Activated CD4-positive, alpha-beta memory T cell treated with anti-CD3 and anti-CD28 coated beads, Interleukin-2, amount 10 ng/mL, durations not matched to agents 7 days and 5 days (primary cell): ENCODE measurements at regions of chr1 and their contacts with region 1.

Region 1: DNA sequence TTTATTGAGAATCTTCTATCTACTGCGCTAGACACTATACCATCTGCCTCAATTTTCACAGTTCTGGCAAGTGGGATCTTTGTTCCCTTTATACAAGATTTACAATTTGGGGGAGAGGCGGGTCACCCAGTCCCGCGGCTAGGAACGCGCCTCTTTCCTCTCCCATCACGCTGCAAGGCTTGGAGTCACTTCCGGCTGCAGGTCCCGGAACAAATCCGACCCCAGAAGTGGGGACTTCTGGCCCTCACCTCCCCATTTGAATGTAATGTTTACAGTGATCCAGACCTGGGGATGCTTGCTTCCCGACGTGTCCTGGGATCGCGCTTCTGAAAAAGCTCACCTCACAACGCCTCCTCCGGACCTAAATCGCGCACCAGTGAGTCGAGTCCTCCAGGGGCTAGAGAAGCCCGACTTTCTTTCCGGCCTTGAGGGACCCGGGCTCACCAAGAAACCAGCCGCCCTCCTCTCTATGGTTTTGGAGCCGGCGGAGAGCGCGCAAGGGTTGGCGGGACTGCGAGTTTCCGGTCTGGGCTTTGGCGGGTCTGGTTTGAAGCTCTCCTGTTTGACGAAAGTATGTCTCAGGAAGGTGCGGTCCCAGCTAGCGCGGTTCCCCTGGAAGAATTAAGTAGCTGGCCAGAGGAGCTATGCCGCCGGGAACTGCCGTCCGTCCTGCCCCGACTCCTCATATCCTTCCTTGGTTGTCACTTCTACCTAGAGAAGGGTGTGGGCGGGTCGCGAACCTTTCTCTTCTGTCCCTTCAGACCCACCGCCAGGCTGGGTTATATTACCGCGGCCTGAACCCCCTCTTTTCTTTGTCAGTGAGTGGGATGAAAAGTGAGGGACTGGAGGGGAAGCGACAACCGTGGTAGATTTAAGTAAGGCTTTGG is at the start of gene METTL18:
- DNase-seq: peak; percentile 95
- H3K4me3 Mint-ChIP-seq: peak within 1 kb of the TSS; percentile 84
- H3K27ac Mint-ChIP-seq: peak within 1 kb of the TSS; percentile 88
- H3K4me1 Mint-ChIP-seq: peaks cover 55% of the 10 kb centered on the region
- H3K27me3 Mint-ChIP-seq: no peaks in the 10 kb centered on the region
- total RNA-seq, gene METTL18: 14.2 to 15.7 TPM

Region 2: DNA sequence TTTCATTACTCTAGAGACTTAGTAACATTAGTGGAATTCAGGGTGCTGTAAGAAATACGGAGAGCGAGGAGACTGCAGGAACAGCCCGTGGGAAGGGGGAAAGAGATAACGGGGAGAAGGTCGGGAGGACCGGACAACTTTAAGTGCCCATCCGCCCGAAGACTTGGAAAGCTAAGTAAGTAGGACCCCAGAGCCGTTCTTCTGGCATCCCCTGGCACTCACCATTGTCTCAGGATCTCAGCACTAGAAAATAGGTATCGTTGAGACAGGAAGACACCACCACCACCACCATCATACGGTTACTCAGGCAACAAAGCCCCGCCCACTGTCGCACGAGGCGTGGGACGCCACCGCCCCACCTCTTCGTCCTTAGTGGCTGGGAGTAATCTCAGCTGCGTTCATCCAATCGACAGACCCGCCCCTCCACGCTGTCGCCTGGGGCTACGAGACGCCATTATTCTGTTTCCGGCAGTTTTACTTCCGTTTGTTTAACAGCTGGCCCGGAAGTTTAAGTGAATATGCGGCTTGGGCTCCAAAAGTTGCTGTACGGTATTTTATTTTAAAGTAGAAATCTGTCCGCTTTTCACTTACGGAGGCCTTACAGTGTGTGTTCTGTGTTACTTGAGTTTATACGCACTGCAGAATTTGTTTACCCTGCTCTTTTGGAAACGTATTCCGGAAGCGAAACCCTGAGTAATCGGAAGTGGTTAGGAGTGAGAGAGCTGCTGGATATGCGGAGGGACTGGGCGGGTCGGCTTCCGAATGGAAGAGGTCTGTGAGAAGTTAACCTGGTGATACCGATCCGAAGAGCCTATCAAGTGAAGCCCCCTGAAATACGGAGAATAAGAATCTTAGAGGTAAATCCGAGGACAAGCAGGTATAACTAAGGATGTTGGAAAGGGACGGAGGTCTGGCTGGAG is 427.0 kb before region 1 on chr1 and contains the starts of genes BLZF1 and NME7:
- CTCF ChIA-PET with region 1: no interaction called
- POLR2A ChIA-PET with region 1: interaction called, 16 read pairs
- DNase-seq: peak; percentile 99
- H3K4me3 Mint-ChIP-seq: no peak within 1 kb of the TSS
- H3K27ac Mint-ChIP-seq: no peak within 1 kb of the TSS
- H3K4me1 Mint-ChIP-seq: peaks cover 39% of the 10 kb centered on the region
- H3K27me3 Mint-ChIP-seq: no peaks in the 10 kb centered on the region
- total RNA-seq, gene BLZF1: 48.1 to 49.3 TPM
- total RNA-seq, gene NME7: 26.1 to 28.3 TPM

Region 3: DNA sequence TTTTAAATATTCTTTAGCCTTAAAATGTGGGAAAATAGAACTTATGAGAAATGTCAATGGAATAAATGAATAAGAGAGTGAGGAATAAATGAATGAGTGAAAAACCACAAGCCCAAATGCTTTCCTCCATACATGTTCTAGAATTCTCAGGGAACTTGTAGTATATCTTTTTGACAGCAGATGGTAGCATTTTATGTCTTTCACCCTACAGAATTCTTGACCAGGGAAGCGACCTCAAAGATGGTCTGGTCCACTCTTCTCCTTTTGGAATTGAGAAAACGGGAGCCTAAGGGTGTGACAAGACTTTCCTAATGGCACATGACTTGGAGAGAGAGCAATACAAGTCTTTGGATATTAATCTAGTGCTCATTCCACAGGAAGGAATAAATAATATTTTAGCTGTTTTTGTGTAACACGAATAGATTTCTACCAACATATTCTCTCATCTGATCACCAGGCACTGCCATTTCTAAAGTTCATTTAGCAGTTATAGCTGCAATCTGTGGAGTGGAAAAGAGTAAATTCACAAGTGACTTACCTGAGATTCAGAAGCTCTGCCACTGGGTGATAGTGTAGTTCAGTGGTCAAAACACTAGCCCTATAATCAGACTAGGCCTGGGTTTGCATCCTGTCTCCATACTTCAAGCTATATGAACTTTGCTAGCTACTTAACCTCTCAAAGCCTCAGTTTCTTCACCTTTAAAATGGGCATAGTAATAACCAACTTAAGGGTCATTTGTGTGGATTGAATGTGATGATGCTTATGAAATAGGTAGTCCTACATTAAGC is 193.5 kb before region 1 on chr1:
- CTCF ChIA-PET with region 1: interaction called, 6 read pairs
- POLR2A ChIA-PET with region 1: interaction called, 21 read pairs
- DNase-seq: no peak
- H3K4me3 Mint-ChIP-seq: no peak overlapping the region
- H3K27ac Mint-ChIP-seq: no peak overlapping the region
- H3K4me1 Mint-ChIP-seq: peaks cover 51% of the 10 kb centered on the region
- H3K27me3 Mint-ChIP-seq: peaks cover 7% of the 10 kb centered on the region

Region 4: DNA sequence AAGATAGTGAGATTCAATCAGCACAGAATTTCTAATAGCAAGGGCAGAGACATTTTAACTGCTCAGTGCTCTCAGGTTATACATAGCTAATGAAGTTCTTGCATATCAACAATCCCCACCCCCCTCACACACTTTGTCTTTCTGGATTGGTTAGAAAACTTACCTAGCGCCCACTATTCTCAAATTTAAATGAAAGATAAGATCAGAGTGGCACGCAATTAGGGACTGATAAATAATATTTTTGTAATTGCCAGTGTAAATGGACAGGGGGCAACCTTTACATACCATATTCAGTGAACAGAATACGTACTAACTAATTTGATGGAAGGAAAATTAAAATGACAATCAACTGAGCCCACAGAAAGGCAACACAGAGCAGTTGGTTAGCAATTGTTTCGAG is 95.1 kb before region 1 on chr1:
- CTCF ChIA-PET with region 1: no interaction called
- POLR2A ChIA-PET with region 1: interaction called, 42 read pairs
- DNase-seq: no peak
- H3K4me3 Mint-ChIP-seq: no peak overlapping the region
- H3K27ac Mint-ChIP-seq: peak overlapping the region; percentile 84
- H3K4me1 Mint-ChIP-seq: peaks cover 96% of the 10 kb centered on the region
- H3K27me3 Mint-ChIP-seq: no peaks in the 10 kb centered on the region

Region 5: GRCh38 chr1:169784094-169784493 is 10.7 kb before region 1 on chr1:
- CTCF ChIA-PET with region 1: no interaction called
- POLR2A ChIA-PET with region 1: interaction called, 26 read pairs
- DNase-seq: no peak
- H3K4me3 Mint-ChIP-seq: no peak overlapping the region
- H3K27ac Mint-ChIP-seq: no peak overlapping the region
- H3K4me1 Mint-ChIP-seq: no peaks in the 10 kb centered on the region
- H3K27me3 Mint-ChIP-seq: peaks cover 52% of the 10 kb centered on the region

Region 6: GRCh38 chr1:169844941-169845608 is 50.3 kb after region 1 on chr1:
- CTCF ChIA-PET with region 1: no interaction called
- POLR2A ChIA-PET with region 1: no interaction called
- DNase-seq: no peak
- H3K4me3 Mint-ChIP-seq: no peak overlapping the region
- H3K27ac Mint-ChIP-seq: no peak overlapping the region
- H3K4me1 Mint-ChIP-seq: no peaks in the 10 kb centered on the region
- H3K27me3 Mint-ChIP-seq: no peaks in the 10 kb centered on the region